Endothelial cell of umbilical vein (primary cell): ENCODE measurements at regions of chr5 and their contacts with region 1.

Region 1: GRCh38 chr5:54517174-54518092 is at the start of gene SNX18:
- DNase-seq: peak; percentile 89
- H3K4me3 ChIP-seq: peak within 1 kb of the TSS; percentile 40 to 60 (median 45)
- H3K27ac ChIP-seq: peak within 1 kb of the TSS; percentile 38
- H3K4me1 ChIP-seq: peaks cover 44% of the 10 kb centered on the region
- H3K27me3 ChIP-seq: no peaks in the 10 kb centered on the region
- CTCF ChIP-seq: peak; percentile 94 to 96
- POLR2A ChIP-seq: peak; percentile 92
- total RNA-seq, gene SNX18: 25.2 and 25.3 TPM in 2 replicates

Region 2: GRCh38 chr5:54492178-54492577 is 25.3 kb before region 1 on chr5:
- CTCF ChIA-PET with region 1: interaction called, 14 read pairs
- POLR2A ChIA-PET with region 1: no interaction called
- dilution Hi-C with region 1: no loop called
- intact Hi-C with region 1: no loop called
- DNase-seq: no peak
- H3K4me3 ChIP-seq: no peak overlapping the region
- H3K27ac ChIP-seq: no peak overlapping the region
- H3K4me1 ChIP-seq: no peaks in the 10 kb centered on the region
- H3K27me3 ChIP-seq: peaks cover 3 to 19% of the 10 kb centered on the region in 2 experiments
- CTCF ChIP-seq: no peak
- POLR2A ChIP-seq: no peak

Region 3: GRCh38 chr5:54703133-54703532 is 185.7 kb after region 1 on chr5:
- CTCF ChIA-PET with region 1: interaction called, 3 read pairs
- POLR2A ChIA-PET with region 1: no interaction called
- dilution Hi-C with region 1: no loop called
- intact Hi-C with region 1: loop called (anchors 2 kb)
- DNase-seq: peak; percentile 67
- H3K4me3 ChIP-seq: no peak overlapping the region
- H3K27ac ChIP-seq: no peak overlapping the region
- H3K4me1 ChIP-seq: peaks cover 18% of the 10 kb centered on the region
- H3K27me3 ChIP-seq: no peaks in the 10 kb centered on the region
- CTCF ChIP-seq: no peak
- POLR2A ChIP-seq: no peak

Region 4: GRCh38 chr5:54820346-54821134 is 303.1 kb after region 1 on chr5:
- CTCF ChIA-PET with region 1: interaction called, 10 read pairs
- POLR2A ChIA-PET with region 1: no interaction called
- dilution Hi-C with region 1: no loop called
- intact Hi-C with region 1: no loop called
- DNase-seq: peak; percentile 85
- H3K4me3 ChIP-seq: no peak overlapping the region
- H3K27ac ChIP-seq: peak overlapping the region; percentile 32
- H3K4me1 ChIP-seq: peaks cover 19% of the 10 kb centered on the region
- H3K27me3 ChIP-seq: no peaks in the 10 kb centered on the region
- CTCF ChIP-seq: no peak
- POLR2A ChIP-seq: no peak

Region 5: DNA sequence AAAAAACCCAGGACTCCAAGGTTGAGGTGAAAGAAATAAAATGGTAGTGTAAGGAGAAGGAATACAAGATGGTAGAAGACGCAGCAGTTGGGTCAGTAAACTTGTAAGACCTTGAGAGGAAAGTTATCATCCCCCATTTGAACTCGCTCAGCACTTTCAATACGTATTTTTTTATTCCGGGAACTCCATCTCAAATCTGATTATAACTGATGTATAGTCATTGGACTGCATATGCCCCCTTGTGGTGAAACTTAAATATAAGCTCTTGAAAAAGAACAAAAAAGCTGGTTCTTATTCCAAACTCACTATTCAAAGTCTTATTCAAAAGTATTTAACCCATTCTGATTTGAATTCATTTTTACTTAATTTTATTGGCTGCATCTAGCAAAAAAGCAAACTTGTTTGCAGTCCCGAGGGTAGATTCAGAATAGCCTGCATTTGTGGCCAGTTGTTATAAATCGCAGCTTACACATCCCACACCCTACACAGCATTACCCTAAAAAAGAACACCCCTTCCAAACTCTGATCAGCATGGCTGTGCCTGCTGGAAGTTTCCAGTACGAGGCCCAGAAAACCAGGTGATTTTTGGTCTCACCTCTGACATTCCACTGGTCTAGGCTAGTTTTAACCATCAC is 350.0 kb after region 1 on chr5:
- CTCF ChIA-PET with region 1: interaction called, 301 read pairs
- POLR2A ChIA-PET with region 1: interaction called, 3 read pairs
- dilution Hi-C with region 1: no loop called
- intact Hi-C with region 1: loop called (anchors 1 kb)
- DNase-seq: peak; percentile 70
- H3K4me3 ChIP-seq: no peak overlapping the region
- H3K27ac ChIP-seq: no peak overlapping the region
- H3K4me1 ChIP-seq: no peaks in the 10 kb centered on the region
- H3K27me3 ChIP-seq: peaks cover 0 to 4% of the 10 kb centered on the region in 2 experiments
- CTCF ChIP-seq: peak; percentile 37 to 40
- POLR2A ChIP-seq: no peak

Region 6: DNA sequence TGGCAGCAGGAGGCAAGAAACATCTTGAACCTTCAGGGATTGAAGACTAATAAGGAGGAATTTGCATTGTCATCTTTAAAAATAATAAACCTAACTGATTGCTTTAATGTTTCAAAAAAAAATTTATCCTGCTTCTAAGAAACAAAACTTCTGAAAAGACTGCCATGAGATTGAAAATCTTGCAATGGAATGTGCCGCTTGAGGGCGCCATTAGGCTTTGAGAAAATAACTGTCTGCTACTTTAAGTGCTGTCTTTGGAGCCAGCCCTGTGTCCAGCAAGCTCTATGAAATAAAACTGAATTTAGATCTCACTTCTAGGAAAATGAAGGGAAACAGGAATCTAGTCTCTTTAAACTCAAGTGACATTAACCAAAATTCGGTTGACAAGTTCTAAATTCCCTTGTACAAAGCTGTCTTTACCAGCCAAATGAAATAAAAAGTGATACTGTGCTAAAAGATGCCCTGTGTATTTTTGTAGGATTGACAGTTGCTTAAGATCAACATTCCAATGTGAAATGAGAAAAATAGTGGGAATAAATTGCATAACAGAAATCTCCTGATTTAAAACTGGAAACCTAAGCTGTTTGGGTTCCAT is 388.6 kb after region 1 on chr5:
- CTCF ChIA-PET with region 1: interaction called, 54 read pairs
- POLR2A ChIA-PET with region 1: no interaction called
- dilution Hi-C with region 1: no loop called
- intact Hi-C with region 1: loop called (anchors 1 kb)
- DNase-seq: peak; percentile 91
- H3K4me3 ChIP-seq: peak overlapping the region in 1 of 3 experiments; percentile 7
- H3K27ac ChIP-seq: no peak overlapping the region
- H3K4me1 ChIP-seq: peaks cover 39% of the 10 kb centered on the region
- H3K27me3 ChIP-seq: no peaks in the 10 kb centered on the region
- CTCF ChIP-seq: peak; percentile 59 to 63
- POLR2A ChIP-seq: no peak

Region 7: GRCh38 chr5:55159763-55160492 is 642.5 kb after region 1 on chr5 and contains the start of gene GPX8:
- CTCF ChIA-PET with region 1: interaction called, 38 read pairs
- POLR2A ChIA-PET with region 1: no interaction called
- dilution Hi-C with region 1: no loop called
- intact Hi-C with region 1: loop called (anchors 1 kb)
- DNase-seq: peak; percentile 89
- H3K4me3 ChIP-seq: peak within 1 kb of the TSS; percentile 66 to 100 (median 96)
- H3K27ac ChIP-seq: peak within 1 kb of the TSS; percentile 89
- H3K4me1 ChIP-seq: peaks cover 53% of the 10 kb centered on the region
- H3K27me3 ChIP-seq: no peaks in the 10 kb centered on the region
- CTCF ChIP-seq: peak; percentile 42 to 46
- POLR2A ChIP-seq: peak; percentile 88
- total RNA-seq, gene GPX8: 147 and 161 TPM in 2 replicates

Region 8: GRCh38 chr5:55232985-55233928 is 715.8 kb after region 1 on chr5 and contains the start of gene CCNO:
- CTCF ChIA-PET with region 1: no interaction called
- POLR2A ChIA-PET with region 1: no interaction called
- dilution Hi-C with region 1: no loop called
- intact Hi-C with region 1: no loop called
- DNase-seq: peak; percentile 83
- H3K4me3 ChIP-seq: peak within 1 kb of the TSS; percentile 44 to 70 (median 53)
- H3K27ac ChIP-seq: no peak within 1 kb of the TSS
- H3K4me1 ChIP-seq: peaks cover 26% of the 10 kb centered on the region
- H3K27me3 ChIP-seq: peaks cover 45% of the 10 kb centered on the region in 2 experiments
- CTCF ChIP-seq: no peak
- POLR2A ChIP-seq: no peak
- total RNA-seq, gene CCNO: 0.58 and 0.88 TPM in 2 replicates